ENCODE measurements at regions of chrX and their contacts with region 1.

Region 1: GRCh38 chrX:153971450-153972367 is at the start of gene HCFC1:
- DNase-seq: peak; percentile 93 to 98 (median 96)
- H3K4me3 ChIP-seq: peak within 1 kb of the TSS; percentile 61 to 90
- H3K4me3 Mint-ChIP-seq: peak within 1 kb of the TSS; percentile 100
- H3K27ac ChIP-seq: peak within 1 kb of the TSS; percentile 99
- H3K27ac Mint-ChIP-seq: peak within 1 kb of the TSS; percentile 97 to 100 (median 100)
- H3K4me1 ChIP-seq: peaks cover 41% of the 10 kb centered on the region
- H3K4me1 Mint-ChIP-seq: peaks cover 21 to 53% (median 41%) of the 10 kb centered on the region in 4 donors
- H3K27me3 ChIP-seq: no peaks in the 10 kb centered on the region
- H3K27me3 Mint-ChIP-seq: peaks cover 0 to 1% of the 10 kb centered on the region in 2 donors
- total RNA-seq, gene HCFC1: 52.6 to 53.4 TPM

Region 2: GRCh38 chrX:153794018-153794896 is 177.5 kb before region 1 on chrX and contains the starts of genes IDH3G and SSR4:
- CTCF ChIA-PET with region 1: no interaction called
- POLR2A ChIA-PET with region 1: interaction called, 10 read pairs
- intact Hi-C with region 1: loop called (anchors 1 kb)
- DNase-seq: peak; percentile 93 to 95 (median 94)
- H3K4me3 ChIP-seq: peak within 1 kb of the TSS; percentile 63 to 69
- H3K4me3 Mint-ChIP-seq: peak within 1 kb of the TSS; percentile 89 to 95 (median 92)
- H3K27ac ChIP-seq: peak within 1 kb of the TSS; percentile 85
- H3K27ac Mint-ChIP-seq: peak within 1 kb of the TSS; percentile 90 to 95 (median 92)
- H3K4me1 ChIP-seq: peaks cover 43% of the 10 kb centered on the region
- H3K4me1 Mint-ChIP-seq: peaks cover 12 to 30% (median 21%) of the 10 kb centered on the region in 4 donors
- H3K27me3 ChIP-seq: no peaks in the 10 kb centered on the region
- H3K27me3 Mint-ChIP-seq: no peaks in the 10 kb centered on the region
- total RNA-seq, gene IDH3G: 39.9 to 45.5 TPM
- total RNA-seq, gene SSR4: 216 to 224 TPM

Region 3: DNA sequence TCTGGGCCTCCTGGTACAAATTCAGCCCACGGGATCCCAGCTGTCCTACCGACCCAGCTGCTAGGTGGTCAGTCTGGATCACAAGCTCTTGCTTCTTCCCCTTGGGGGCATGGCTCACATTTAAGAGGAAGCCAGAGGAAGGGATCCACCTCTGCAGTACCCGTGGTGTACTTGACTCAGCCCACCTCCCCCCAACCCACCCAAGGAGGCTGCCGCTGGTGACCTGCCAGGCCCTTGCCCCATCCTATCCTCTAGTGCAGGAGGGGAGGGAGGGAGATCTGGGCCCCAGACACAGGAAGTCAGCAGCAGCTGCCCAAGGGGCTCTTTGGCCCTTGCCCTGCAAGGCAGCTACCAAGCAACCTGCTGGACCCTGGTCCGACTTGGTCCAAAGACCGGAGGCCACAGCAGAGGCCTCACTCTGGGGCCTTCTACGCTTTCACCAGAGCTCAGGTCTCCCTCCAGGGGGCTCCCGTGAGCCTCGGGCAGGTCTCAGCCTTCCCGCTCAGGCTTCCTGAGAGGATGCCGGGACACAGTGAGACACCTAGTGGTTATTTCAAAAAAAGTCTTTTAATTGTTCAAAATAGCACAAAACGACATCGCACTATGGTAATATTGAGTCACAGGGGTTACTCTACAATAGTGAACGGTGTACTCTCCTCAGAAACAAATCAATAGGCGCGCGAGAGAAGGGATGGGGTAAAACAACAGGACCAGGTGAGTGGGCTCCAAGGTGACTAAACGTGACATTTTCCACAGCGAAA is 24.5 kb before region 1 on chrX:
- CTCF ChIA-PET with region 1: interaction called, 31 read pairs
- POLR2A ChIA-PET with region 1: interaction called, 10 read pairs
- intact Hi-C with region 1: no loop called
- DNase-seq: peak; percentile 77 to 82 (median 80)
- H3K4me3 ChIP-seq: no peak overlapping the region
- H3K4me3 Mint-ChIP-seq: no peak overlapping the region
- H3K27ac ChIP-seq: peak overlapping the region; percentile 9
- H3K27ac Mint-ChIP-seq: peak overlapping the region in 6 of 7 donors; percentile 40 to 91 (median 68)
- H3K4me1 ChIP-seq: peaks cover 20% of the 10 kb centered on the region
- H3K4me1 Mint-ChIP-seq: peaks cover 5 to 16% (median 6%) of the 10 kb centered on the region in 4 donors
- H3K27me3 ChIP-seq: no peaks in the 10 kb centered on the region
- H3K27me3 Mint-ChIP-seq: no peaks in the 10 kb centered on the region

Region 4: DNA sequence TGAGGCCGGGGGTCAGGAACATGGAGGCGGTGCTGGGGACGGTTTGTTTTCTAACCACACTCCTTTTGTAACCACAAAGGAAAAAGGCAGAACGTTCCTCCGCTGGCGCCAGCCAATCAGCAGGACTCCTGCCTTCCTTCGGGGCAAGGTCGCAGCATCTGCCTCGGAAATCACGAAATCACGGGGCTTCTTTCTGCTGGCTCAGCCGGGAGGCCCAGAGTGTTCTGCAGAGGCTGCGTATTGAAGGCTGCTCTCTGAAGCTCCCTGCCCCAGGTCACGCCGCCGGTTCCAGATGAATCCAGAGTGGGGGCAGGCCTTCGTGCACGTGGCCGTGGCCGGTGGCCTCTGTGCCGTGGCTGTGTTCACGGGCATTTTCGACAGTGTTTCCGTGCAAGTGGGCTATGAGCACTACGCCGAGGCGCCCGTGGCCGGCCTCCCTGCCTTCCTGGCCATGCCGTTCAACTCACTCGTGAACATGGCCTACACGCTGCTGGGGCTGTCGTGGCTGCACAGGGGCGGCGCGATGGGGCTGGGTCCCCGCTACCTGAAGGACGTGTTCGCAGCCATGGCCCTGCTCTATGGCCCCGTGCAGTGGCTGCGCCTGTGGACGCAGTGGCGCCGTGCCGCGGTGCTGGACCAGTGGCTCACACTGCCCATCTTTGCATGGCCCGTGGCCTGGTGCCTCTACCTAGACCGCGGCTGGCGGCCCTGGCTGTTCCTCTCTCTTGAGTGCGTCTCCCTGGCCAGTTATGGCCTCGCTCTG is 10.2 kb after region 1 on chrX:
- CTCF ChIA-PET with region 1: interaction called, 3 read pairs
- POLR2A ChIA-PET with region 1: interaction called, 129 read pairs
- intact Hi-C with region 1: loop called (anchors 1 kb)
- DNase-seq: peak; percentile 64 to 72 (median 68)
- H3K4me3 ChIP-seq: peak overlapping the region in 1 of 2 donors; percentile 19
- H3K4me3 Mint-ChIP-seq: peak overlapping the region; percentile 59 to 86 (median 74)
- H3K27ac ChIP-seq: peak overlapping the region; percentile 52
- H3K27ac Mint-ChIP-seq: peak overlapping the region; percentile 90 to 97 (median 94)
- H3K4me1 ChIP-seq: peaks cover 56% of the 10 kb centered on the region
- H3K4me1 Mint-ChIP-seq: peaks cover 22 to 67% (median 40%) of the 10 kb centered on the region in 4 donors
- H3K27me3 ChIP-seq: no peaks in the 10 kb centered on the region
- H3K27me3 Mint-ChIP-seq: no peaks in the 10 kb centered on the region

Region 5: DNA sequence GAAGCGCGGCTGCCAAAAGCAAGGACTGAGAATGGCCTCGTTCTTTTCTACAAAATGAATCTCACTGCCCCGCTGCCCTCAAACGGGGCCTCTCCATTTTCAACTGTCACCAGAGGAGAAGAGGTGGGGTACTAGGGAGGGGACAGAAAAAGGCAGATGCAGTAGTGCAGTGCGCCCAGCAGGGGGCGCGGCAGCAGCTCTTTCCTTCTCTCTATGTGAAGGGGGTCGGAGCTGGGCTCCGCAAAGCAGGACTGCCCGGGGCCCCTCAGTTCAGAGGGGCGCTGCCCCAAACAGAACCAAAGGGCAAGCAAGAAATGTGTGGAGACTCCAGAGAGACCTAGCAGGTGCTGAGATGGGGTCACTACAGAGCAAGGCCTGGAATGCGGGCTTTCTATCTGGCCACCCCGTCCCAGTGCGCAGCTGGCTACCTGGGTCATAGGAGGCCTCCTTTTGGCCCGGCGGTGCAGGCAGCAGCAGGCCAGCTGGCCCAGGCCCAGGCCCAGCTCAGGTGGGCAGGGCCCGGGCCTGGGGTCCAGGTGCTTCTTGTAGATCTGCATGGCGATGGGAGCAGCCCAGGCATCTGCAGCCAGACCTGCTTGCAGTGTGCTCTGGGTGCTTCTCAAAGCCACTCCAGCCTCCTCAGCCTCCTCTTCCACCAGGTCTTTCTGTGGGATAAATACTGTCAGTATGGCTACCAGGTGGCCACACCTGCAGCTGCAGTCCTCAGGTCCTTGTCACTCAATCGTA is 42.1 kb after region 1 on chrX:
- CTCF ChIA-PET with region 1: interaction called, 18 read pairs
- POLR2A ChIA-PET with region 1: interaction called, 61 read pairs
- intact Hi-C with region 1: loop called (anchors 5 kb)
- DNase-seq: peak in 4 of 5 donors; percentile 51 to 58 (median 54)
- H3K4me3 ChIP-seq: no peak overlapping the region
- H3K4me3 Mint-ChIP-seq: peak overlapping the region in 1 of 8 donors; percentile 20
- H3K27ac ChIP-seq: no peak overlapping the region
- H3K27ac Mint-ChIP-seq: peak overlapping the region in 6 of 7 donors; percentile 25 to 85 (median 74)
- H3K4me1 ChIP-seq: peaks cover 11% of the 10 kb centered on the region
- H3K4me1 Mint-ChIP-seq: peaks cover 2 to 20% (median 6%) of the 10 kb centered on the region in 4 donors
- H3K27me3 ChIP-seq: no peaks in the 10 kb centered on the region
- H3K27me3 Mint-ChIP-seq: no peaks in the 10 kb centered on the region

Region 6: DNA sequence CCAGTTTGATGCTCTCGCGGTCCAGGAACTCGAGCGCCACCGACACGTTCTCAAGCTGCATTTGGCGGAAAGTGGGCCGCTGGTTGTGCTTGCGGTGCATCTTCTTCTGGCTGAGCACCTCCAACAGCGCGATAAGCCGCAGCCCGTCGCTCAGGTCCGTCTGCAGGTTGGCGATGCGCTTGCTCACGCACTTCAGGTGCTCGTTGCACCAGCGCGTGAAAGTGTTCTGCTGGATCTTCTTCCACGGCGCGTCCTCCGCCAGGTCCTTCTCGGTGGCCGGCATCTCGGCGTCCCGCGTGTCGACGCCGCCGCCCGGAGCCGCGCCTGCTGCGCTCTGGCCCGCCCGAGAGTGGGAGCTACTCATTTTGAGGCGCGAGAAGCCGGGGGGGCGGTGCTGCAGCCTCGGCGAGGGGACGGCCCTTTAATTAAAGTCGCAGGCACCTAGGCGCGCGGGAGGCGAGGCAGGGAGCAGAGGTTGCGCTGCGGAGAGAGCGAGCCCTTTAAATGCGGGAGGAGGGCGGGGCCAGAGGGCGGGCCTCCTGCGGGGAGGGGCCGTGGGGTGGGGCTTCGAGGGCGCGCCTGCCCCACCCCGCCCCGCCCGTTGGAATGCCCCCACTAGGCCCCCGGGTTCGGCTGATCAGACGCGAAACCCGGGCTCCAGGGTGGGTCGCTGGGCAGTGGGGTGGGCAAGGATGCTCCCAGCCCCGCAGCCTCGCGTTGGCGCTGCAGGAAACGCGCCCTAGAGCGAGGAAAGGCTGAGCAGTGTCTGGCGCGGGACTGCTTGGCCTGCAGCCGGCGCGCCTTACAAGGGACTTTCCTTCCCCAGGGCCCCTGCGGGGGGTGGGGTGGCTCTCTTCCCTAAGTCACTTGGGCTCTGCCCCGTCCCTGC is 399.4 kb after region 1 on chrX:
- CTCF ChIA-PET with region 1: interaction called, 3 read pairs
- POLR2A ChIA-PET with region 1: interaction called, 12 read pairs
- intact Hi-C with region 1: loop called (anchors 10 kb)
- DNase-seq: peak; percentile 89 to 92 (median 92)
- H3K4me3 ChIP-seq: peak overlapping the region in 1 of 2 donors; percentile 59
- H3K4me3 Mint-ChIP-seq: peak overlapping the region; percentile 78 to 93 (median 86)
- H3K27ac ChIP-seq: peak overlapping the region; percentile 92
- H3K27ac Mint-ChIP-seq: peak overlapping the region; percentile 78 to 94 (median 87)
- H3K4me1 ChIP-seq: peaks cover 51% of the 10 kb centered on the region
- H3K4me1 Mint-ChIP-seq: peaks cover 3 to 42% (median 25%) of the 10 kb centered on the region in 4 donors
- H3K27me3 ChIP-seq: no peaks in the 10 kb centered on the region
- H3K27me3 Mint-ChIP-seq: no peaks in the 10 kb centered on the region

Region 7: DNA sequence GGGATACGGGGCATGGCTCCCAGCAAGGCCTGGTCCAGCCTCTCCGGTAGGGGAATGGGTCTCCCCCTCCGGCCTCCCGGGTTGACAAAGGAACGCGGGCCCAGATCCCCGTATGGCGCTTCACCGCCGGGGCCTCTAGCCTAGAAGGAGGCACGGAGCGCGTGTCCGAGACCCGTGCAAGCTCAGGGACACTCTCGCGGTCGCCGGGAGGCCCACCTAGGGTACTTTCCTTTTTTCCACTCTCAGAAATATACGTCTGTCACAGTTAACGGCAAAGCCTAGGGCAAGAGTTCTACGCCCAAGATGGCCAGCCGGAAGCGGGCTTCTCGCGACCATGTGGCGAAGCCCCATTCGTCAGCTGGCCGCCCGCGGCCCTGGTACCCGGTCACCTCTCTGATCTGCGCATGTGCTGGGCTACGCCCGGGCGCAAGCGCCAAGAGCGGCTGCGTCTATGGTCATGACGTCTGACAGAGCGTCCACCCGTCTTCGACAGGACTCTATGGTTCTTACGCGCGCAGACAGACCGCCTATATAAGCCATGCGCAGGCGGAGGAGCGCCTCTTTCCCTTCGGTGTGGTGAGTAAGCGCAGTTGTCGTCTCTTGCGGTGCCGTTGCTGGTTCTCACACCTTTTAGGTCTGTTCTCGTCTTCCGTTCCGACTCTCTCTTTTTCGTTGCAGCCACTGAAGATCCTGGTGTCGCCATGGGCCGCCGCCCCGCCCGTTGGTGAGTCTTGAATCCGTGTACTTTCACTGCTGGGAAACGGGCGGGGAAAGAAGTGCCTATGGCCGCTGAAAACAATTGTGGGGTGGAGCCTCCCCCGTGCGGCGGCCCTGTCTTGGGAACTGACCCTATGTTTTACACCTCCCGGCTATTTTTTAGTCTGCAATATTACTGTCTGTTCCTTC is 426.4 kb after region 1 on chrX and contains the start of gene RPL10:
- CTCF ChIA-PET with region 1: no interaction called
- POLR2A ChIA-PET with region 1: interaction called, 11 read pairs
- intact Hi-C with region 1: no loop called
- DNase-seq: peak; percentile 86 to 94 (median 92)
- H3K4me3 ChIP-seq: peak within 1 kb of the TSS; percentile 55 to 95
- H3K4me3 Mint-ChIP-seq: peak within 1 kb of the TSS; percentile 96 to 99 (median 99)
- H3K27ac ChIP-seq: peak within 1 kb of the TSS; percentile 96
- H3K27ac Mint-ChIP-seq: peak within 1 kb of the TSS; percentile 99 to 100 (median 99)
- H3K4me1 ChIP-seq: peaks cover 15% of the 10 kb centered on the region
- H3K4me1 Mint-ChIP-seq: peaks cover 7 to 32% (median 16%) of the 10 kb centered on the region in 4 donors
- H3K27me3 ChIP-seq: no peaks in the 10 kb centered on the region
- H3K27me3 Mint-ChIP-seq: no peaks in the 10 kb centered on the region
- total RNA-seq, gene RPL10: 5,157 to 5,386 TPM